ENCODE measurements at regions of chr17 and their contacts with region 1.

Region 1: GRCh38 chr17:8118769-8119580 is 661 bp upstream of the ALOXE3 start:
- DNase-seq: peak; percentile 86 to 93 (median 90)
- H3K4me3 ChIP-seq: peak overlapping the region; percentile 44 to 94 (median 84)
- H3K27ac ChIP-seq: peak overlapping the region in 1 of 2 experiments; percentile 58
- H3K4me1 ChIP-seq: peaks cover 2 to 57% (median 53%) of the 10 kb centered on the region in 4 experiments
- H3K27me3 ChIP-seq: peaks cover 4 to 64% (median 32%) of the 10 kb centered on the region in 5 experiments

Region 2: GRCh38 chr17:8073627-8074484 is 45.1 kb before region 1 on chr17:
- CTCF ChIA-PET with region 1: interaction called, 24 read pairs
- POLR2A ChIA-PET with region 1: interaction called, 4 read pairs
- DNase-seq: peak; percentile 82 to 86 (median 85)
- H3K4me3 ChIP-seq: peak overlapping the region in 3 of 7 experiments; percentile 11 to 63 (median 58)
- H3K27ac ChIP-seq: no peak overlapping the region
- H3K4me1 ChIP-seq: peaks cover 0 to 23% (median 17%) of the 10 kb centered on the region in 4 experiments
- H3K27me3 ChIP-seq: peaks cover 0 to 49% (median 33%) of the 10 kb centered on the region in 5 experiments

Region 3: GRCh38 chr17:8091033-8091687 is 27.8 kb before region 1 on chr17:
- CTCF ChIA-PET with region 1: interaction called, 206 read pairs
- POLR2A ChIA-PET with region 1: no interaction called
- DNase-seq: peak in 2 of 3 donors; percentile 41 to 46
- H3K4me3 ChIP-seq: no peak overlapping the region
- H3K27ac ChIP-seq: no peak overlapping the region
- H3K4me1 ChIP-seq: peaks cover 0 to 8% (median 5%) of the 10 kb centered on the region in 4 experiments
- H3K27me3 ChIP-seq: peaks cover 0 to 18% (median 10%) of the 10 kb centered on the region in 5 experiments

Region 4: GRCh38 chr17:8151123-8151640 is 32.2 kb after region 1 on chr17:
- CTCF ChIA-PET with region 1: interaction called, 10 read pairs
- POLR2A ChIA-PET with region 1: interaction called, 5 read pairs
- DNase-seq: peak; percentile 88 to 92 (median 90)
- H3K4me3 ChIP-seq: peak overlapping the region; percentile 61 to 94 (median 80)
- H3K27ac ChIP-seq: peak overlapping the region; percentile 85 to 92
- H3K4me1 ChIP-seq: peaks cover 12 to 62% (median 60%) of the 10 kb centered on the region in 4 experiments
- H3K27me3 ChIP-seq: no peaks in the 10 kb centered on the region

Region 5: DNA sequence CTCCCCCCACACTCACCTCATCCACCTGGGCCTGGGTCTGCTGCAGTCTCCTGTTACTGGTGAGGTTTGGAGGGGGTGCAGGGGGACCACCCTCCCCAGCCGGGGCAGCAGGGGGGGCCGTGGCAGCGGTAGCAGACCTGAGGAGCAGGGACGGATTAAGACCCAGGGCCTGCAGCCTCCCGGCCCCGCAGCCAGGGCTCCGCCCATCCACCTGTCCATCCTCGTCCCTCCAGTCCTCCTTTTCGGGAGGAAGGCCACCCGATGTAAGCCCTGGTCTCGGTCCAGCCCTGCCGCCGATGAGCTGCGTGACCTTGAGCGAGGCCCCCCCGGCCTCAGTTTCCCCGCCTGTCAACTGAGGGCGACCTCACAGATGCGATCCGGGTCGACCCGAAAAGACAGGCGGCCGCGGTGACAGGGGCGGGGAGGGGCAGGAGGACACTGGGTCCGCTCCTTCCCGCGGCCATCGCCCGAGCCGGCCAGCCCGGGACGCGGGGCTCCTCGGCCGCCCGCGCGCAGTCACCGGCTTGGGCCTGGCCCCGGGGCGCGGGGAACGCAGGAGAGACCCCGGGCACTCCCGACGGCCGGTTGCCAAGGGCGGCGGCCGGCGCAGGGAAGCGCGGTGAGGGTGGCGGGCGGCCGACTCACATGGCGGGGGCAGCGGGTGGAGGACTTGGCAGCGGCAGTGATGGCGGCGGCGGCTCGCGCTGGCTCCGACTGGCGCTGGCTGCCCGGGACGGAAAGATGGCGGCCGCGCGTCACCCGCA is 43.4 kb after region 1 on chr17 and contains the start of gene VAMP2:
- CTCF ChIA-PET with region 1: interaction called, 25 read pairs
- POLR2A ChIA-PET with region 1: interaction called, 3 read pairs
- DNase-seq: peak; percentile 62 to 80 (median 73)
- H3K4me3 ChIP-seq: peak within 1 kb of the TSS; percentile 74 to 98 (median 90)
- H3K27ac ChIP-seq: peak within 1 kb of the TSS; percentile 72 to 88
- H3K4me1 ChIP-seq: peaks cover 4 to 47% (median 40%) of the 10 kb centered on the region in 4 experiments
- H3K27me3 ChIP-seq: no peaks in the 10 kb centered on the region

Region 6: GRCh38 chr17:8248751-8249607 is 130.0 kb after region 1 on chr17 and contains the start of gene PFAS:
- CTCF ChIA-PET with region 1: no interaction called
- POLR2A ChIA-PET with region 1: no interaction called
- DNase-seq: peak; percentile 95 to 97 (median 97)
- H3K4me3 ChIP-seq: peak within 1 kb of the TSS; percentile 91 to 99 (median 95)
- H3K27ac ChIP-seq: peak within 1 kb of the TSS; percentile 98
- H3K4me1 ChIP-seq: peaks cover 8 to 26% (median 22%) of the 10 kb centered on the region in 4 experiments
- H3K27me3 ChIP-seq: no peaks in the 10 kb centered on the region

Measured in common myeloid progenitor, CD34-positive (primary cell).